MCF 10A (cell line): ENCODE measurements at regions of chr1 and their contacts with region 1.

Region 1: DNA sequence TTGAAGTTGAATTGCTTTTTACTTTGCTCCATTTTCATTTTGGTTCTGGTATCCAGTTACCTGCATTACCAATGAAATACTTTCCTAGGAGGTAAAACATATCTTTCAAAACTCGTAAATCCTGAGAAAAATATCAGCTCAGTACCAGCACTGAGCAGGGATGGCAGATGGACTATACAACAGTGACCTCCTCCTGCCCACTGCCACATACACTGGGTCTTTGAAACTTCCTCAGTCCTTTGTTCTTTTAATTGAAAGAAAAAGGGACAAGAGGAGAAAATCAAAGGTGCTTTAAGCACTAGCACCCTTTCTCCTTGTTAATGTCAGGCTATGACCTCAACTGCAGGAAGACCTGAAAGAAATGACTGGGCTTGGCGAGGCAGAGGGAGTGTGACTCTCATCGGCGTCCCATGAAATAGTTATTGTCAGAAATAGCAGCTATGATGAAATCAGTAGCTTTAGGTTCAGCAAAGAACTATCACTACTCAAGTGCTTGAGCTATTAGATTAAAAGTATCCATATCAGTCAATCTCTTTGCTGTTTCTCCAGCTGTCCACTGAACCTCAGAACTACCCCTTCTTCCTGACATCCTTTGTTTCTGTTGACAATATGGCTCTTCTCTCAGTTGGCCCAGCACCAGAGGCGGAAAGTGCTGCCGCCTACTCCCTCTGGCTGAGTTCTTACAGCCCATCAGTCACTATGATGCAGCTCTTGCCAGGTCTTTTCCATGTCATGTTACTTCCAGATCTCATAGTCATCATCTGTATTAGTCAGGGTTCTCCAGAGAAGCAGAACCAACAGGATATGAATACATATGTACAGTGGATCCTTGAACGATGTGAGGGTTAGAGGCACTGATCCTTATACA is 207.0 kb upstream of the MAP1LC3C start:
- DNase-seq: peak; percentile 88
- H3K4me3 Mint-ChIP-seq: no peak overlapping the region
- H3K27ac Mint-ChIP-seq: peak overlapping the region; percentile 39
- H3K4me1 Mint-ChIP-seq: peaks cover 27% of the 10 kb centered on the region
- H3K27me3 Mint-ChIP-seq: no peaks in the 10 kb centered on the region
- CTCF ChIP-seq: no peak

Region 2: GRCh38 chr1:242219298-242219901 is 13.5 kb after region 1 on chr1:
- CTCF ChIA-PET with region 1: interaction called, 7 read pairs
- POLR2A ChIA-PET with region 1: interaction called, 13 read pairs
- intact Hi-C with region 1: loop called (anchors 2 kb)
- DNase-seq: peak; percentile 87
- H3K4me3 Mint-ChIP-seq: no peak overlapping the region
- H3K27ac Mint-ChIP-seq: peak overlapping the region; percentile 18
- H3K4me1 Mint-ChIP-seq: peaks cover 15% of the 10 kb centered on the region
- H3K27me3 Mint-ChIP-seq: no peaks in the 10 kb centered on the region
- CTCF ChIP-seq: no peak

Region 3: DNA sequence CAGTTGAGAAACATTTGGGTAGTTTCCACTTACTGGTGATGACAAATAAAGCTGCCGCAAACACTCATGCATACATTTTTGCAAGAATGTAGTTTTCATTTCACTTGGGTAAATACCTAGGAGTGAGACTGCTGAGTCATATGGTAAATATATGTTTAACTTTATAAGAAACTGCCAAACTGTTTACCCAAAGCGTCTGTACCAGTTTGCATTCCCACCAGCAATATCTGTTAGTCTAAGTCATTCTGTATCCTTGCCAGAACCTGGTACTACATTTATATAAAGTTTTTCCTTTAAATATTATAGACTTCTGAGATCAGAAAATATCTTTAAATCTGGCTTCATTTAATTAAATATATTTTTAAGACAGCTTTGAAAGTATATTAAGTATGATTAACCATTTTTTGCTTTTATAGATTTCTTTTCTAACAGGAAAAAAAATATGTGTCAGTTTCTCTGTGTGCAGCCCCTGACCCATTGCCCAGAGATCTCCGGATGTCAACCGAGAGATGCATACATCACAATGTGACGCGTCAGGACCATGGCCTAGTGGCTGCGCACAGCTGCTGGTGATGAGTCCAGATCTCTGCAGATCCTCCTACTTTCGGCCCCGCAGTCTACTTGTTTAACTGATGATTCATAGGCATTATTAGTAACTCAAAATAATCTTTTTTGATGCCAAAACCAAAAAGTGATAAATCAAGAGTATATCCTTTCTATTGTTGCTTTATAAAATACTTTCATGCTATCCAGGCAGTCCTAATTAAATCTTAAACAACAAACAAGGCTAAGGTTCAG is 20.1 kb after region 1 on chr1:
- CTCF ChIA-PET with region 1: interaction called, 7 read pairs
- POLR2A ChIA-PET with region 1: interaction called, 11 read pairs
- intact Hi-C with region 1: loop called (anchors 2 kb)
- DNase-seq: peak; percentile 96
- H3K4me3 Mint-ChIP-seq: no peak overlapping the region
- H3K27ac Mint-ChIP-seq: peak overlapping the region; percentile 40
- H3K4me1 Mint-ChIP-seq: peaks cover 28% of the 10 kb centered on the region
- H3K27me3 Mint-ChIP-seq: no peaks in the 10 kb centered on the region
- CTCF ChIP-seq: no peak